Activated CD4-positive, alpha-beta memory T cell treated with anti-CD3 and anti-CD28 coated beads, Interleukin-2, amount 10 ng/mL, durations not matched to agents 7 days and 5 days (primary cell): ENCODE measurements at regions of chr11 and their contacts with region 1.

Region 1: GRCh38 chr11:65540297-65541092 is 15.6 kb downstream of the SCYL1 start:
- DNase-seq: peak; percentile 92
- H3K4me3 Mint-ChIP-seq: peak overlapping the region; percentile 80
- H3K27ac Mint-ChIP-seq: peak overlapping the region; percentile 74
- H3K4me1 Mint-ChIP-seq: peaks cover 30% of the 10 kb centered on the region
- H3K27me3 Mint-ChIP-seq: no peaks in the 10 kb centered on the region

Region 2: DNA sequence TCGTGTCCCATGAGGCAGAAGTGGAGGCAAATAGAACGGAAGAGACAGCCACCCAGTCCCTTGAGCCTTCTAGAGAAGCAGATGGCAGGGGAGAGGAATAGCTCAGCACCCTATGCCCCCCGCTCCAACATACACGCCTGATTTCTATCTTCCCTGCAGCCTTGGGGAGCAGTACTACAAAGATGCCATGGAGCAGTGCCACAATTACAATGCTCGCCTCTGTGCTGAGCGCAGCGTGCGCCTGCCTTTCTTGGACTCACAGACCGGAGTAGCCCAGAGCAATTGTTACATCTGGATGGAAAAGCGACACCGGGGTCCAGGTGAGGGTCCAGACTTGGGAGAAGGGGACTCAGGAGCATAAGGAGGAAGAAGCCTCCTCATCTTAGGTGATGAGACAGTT is 200.3 kb before region 1 on chr11:
- CTCF ChIA-PET with region 1: no interaction called
- POLR2A ChIA-PET with region 1: no interaction called
- DNase-seq: no peak
- H3K4me3 Mint-ChIP-seq: no peak overlapping the region
- H3K27ac Mint-ChIP-seq: no peak overlapping the region
- H3K4me1 Mint-ChIP-seq: peaks cover 22% of the 10 kb centered on the region
- H3K27me3 Mint-ChIP-seq: no peaks in the 10 kb centered on the region

Region 3: GRCh38 chr11:65404638-65405339 is 135.7 kb before region 1 on chr11:
- CTCF ChIA-PET with region 1: no interaction called
- POLR2A ChIA-PET with region 1: no interaction called
- DNase-seq: no peak
- H3K4me3 Mint-ChIP-seq: no peak overlapping the region
- H3K27ac Mint-ChIP-seq: no peak overlapping the region
- H3K4me1 Mint-ChIP-seq: peaks cover 2% of the 10 kb centered on the region
- H3K27me3 Mint-ChIP-seq: no peaks in the 10 kb centered on the region

Region 4: GRCh38 chr11:65459552-65459951 is 80.9 kb before region 1 on chr11:
- CTCF ChIA-PET with region 1: no interaction called
- POLR2A ChIA-PET with region 1: no interaction called
- DNase-seq: no peak
- H3K4me3 Mint-ChIP-seq: no peak overlapping the region
- H3K27ac Mint-ChIP-seq: no peak overlapping the region
- H3K4me1 Mint-ChIP-seq: peaks cover 28% of the 10 kb centered on the region
- H3K27me3 Mint-ChIP-seq: peaks cover 1% of the 10 kb centered on the region

Region 5: DNA sequence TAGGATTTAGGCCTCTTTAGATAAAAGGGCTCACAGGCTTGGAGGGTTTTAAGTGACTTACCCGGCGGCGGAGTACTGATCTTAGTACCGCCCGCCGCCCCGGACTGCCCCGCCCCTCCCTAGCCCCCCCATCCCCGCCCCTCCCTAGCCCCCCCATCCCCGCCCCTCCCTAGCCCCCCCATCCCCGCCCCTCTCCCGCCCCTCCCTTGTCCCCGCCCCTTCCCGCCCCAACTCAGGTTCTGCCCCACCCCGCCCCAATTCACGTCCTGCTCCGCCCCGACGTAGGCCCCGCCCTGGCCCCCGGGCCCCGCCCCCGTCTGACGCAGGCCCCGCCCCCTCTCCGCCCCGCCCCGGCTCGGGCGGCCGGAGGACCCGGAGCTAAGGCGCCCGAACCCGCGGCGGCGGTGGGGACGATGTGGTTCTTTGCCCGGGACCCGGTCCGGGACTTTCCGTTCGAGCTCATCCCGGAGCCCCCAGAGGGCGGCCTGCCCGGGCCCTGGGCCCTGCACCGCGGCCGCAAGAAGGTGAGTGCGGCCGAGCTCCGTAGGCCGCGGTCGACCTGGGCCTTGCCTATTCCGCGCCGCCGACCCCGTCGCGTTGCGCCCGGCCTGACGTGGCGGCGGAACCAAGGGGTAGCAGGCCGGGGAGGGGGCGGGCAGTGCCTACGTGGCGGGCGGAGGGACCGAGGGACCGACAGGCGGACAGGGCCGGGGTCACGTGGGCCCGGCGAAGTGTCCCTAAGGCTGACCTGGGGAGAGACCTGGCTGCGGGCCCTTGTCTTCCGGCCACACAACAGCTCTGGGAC is 15.6 kb before region 1 on chr11 and contains the start of gene SCYL1:
- CTCF ChIA-PET with region 1: interaction called, 17 read pairs
- POLR2A ChIA-PET with region 1: interaction called, 26 read pairs
- DNase-seq: peak; percentile 86
- H3K4me3 Mint-ChIP-seq: peak within 1 kb of the TSS; percentile 80
- H3K27ac Mint-ChIP-seq: peak within 1 kb of the TSS; percentile 83
- H3K4me1 Mint-ChIP-seq: peaks cover 56% of the 10 kb centered on the region
- H3K27me3 Mint-ChIP-seq: no peaks in the 10 kb centered on the region
- total RNA-seq, gene SCYL1: 56.9 to 58.5 TPM

Region 6: GRCh38 chr11:65551572-65552398 is 11.3 kb after region 1 on chr11:
- CTCF ChIA-PET with region 1: interaction called, 41 read pairs
- POLR2A ChIA-PET with region 1: interaction called, 19 read pairs
- DNase-seq: peak; percentile 73
- H3K4me3 Mint-ChIP-seq: no peak overlapping the region
- H3K27ac Mint-ChIP-seq: peak overlapping the region; percentile 31
- H3K4me1 Mint-ChIP-seq: peaks cover 70% of the 10 kb centered on the region
- H3K27me3 Mint-ChIP-seq: no peaks in the 10 kb centered on the region

Region 7: DNA sequence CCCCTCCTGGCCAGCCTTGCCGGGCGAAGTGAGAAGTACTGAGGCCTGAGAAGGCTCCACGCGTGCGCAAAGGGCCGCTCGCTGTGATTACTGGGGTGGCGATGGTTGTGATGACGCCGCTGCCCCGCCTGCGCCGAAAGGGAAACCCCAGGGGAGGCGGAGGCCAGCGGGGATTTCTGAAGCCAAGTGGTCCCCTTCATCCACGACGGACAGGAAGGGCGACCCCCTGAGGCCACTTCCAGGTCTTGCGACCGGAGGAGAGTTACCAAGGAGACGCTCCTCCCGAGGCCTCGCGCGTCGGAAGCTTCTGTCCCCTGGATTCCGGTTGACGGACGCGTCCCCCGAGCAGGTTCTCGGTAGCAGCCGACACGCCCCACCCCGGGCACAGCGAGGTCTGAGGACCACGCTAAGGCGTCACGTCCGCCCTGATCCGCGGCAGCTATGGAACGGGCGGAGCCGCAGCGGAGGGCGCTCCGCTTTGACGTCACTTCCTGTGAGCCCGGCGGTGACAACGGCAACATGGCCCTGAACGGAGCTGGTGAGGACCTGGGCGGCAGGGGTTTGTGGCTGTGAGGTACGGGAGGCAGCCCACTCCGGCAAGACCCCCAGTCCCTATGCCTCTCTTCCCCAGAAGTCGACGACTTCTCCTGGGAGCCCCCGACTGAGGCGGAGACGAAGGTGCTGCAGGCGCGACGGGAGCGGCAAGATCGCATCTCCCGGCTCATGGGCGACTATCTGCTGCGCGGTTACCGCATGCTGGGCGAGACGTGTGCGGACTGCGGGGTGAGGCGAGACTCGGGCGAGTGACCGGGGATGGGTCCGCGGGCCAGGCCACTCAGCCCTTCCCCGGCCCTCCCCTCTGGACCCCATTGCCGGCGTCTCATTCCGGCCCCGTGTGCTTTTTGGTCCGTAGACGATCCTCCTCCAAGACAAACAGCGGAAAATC is 29.8 kb after region 1 on chr11 and contains the start of gene ZNRD2:
- CTCF ChIA-PET with region 1: interaction called, 88 read pairs
- POLR2A ChIA-PET with region 1: interaction called, 54 read pairs
- DNase-seq: peak; percentile 99
- H3K4me3 Mint-ChIP-seq: peak within 1 kb of the TSS; percentile 100
- H3K27ac Mint-ChIP-seq: peak within 1 kb of the TSS; percentile 99
- H3K4me1 Mint-ChIP-seq: peaks cover 71% of the 10 kb centered on the region
- H3K27me3 Mint-ChIP-seq: no peaks in the 10 kb centered on the region
- total RNA-seq, gene ZNRD2: 25.3 to 27.8 TPM

Region 8: DNA sequence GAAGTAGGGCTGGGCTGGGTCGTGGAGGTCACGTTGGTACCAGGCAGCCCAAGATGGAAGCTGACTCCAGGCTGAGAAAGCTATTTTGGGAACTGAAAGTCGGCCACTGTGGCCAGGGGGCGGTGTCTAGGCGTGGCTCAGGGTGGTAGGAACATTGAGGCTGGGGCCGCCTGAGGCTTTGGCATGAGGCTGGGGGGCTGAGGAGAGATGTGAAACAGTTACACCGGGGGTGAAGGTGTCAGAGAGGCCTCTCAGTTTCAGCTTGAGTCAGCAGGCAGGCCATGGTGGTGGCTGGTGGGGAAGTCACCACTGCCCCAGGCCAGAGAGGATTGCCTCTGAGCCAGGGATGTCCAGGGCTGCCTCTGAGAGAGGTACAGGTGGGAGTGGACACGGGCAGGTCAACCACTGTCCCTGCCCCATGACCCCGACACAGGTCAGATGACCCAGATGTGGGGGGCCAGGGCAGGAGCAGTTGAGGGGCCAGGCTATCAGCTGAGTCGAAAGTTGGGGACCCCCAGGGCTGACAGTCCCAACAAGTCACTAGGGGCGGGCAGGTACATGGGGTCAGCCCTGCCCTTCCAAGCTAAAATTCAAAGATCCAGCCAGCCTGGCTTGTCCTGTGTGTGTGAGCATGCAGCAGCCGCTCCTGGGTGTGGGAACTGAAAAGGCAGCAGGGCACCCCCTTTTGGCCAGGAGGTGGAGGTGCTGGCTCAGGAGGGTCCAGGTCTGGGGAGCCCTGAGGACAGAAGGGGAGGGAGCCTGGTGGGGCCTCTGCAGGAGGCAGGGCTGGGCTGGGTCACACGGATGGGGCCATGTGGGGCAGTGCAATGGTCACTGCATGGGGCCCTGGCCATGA is 47.9 kb after region 1 on chr11:
- CTCF ChIA-PET with region 1: interaction called, 44 read pairs
- POLR2A ChIA-PET with region 1: interaction called, 17 read pairs
- DNase-seq: peak; percentile 83
- H3K4me3 Mint-ChIP-seq: peak overlapping the region; percentile 44
- H3K27ac Mint-ChIP-seq: peak overlapping the region; percentile 95
- H3K4me1 Mint-ChIP-seq: peaks cover 43% of the 10 kb centered on the region
- H3K27me3 Mint-ChIP-seq: no peaks in the 10 kb centered on the region